Activated CD8-positive, alpha-beta T cell treated with anti-CD3 and anti-CD28 coated beads for 36 hours (primary cell): ENCODE measurements at regions of chr3 and their contacts with region 1.

Region 1: DNA sequence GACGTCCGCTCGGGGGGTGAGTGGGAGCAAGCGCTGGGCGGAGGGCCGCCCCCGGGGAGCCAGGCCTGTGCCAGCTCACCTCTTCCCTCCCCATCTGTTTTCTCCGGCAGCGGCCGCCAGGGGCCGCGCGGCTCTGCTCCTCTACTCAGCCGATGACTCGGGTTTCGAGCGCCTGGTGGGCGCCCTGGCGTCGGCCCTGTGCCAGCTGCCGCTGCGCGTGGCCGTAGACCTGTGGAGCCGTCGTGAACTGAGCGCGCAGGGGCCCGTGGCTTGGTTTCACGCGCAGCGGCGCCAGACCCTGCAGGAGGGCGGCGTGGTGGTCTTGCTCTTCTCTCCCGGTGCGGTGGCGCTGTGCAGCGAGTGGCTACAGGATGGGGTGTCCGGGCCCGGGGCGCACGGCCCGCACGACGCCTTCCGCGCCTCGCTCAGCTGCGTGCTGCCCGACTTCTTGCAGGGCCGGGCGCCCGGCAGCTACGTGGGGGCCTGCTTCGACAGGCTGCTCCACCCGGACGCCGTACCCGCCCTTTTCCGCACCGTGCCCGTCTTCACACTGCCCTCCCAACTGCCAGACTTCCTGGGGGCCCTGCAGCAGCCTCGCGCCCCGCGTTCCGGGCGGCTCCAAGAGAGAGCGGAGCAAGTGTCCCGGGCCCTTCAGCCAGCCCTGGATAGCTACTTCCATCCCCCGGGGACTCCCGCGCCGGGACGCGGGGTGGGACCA is 632 bp upstream of the CRELD1 start:
- DNase-seq: peak; percentile 95
- ATAC-seq: peak; percentile 78
- H3K4me3 Mint-ChIP-seq: peak overlapping the region; percentile 83
- H3K27ac Mint-ChIP-seq: peak overlapping the region; percentile 91
- H3K4me1 Mint-ChIP-seq: peaks cover 32% of the 10 kb centered on the region
- H3K27me3 Mint-ChIP-seq: no peaks in the 10 kb centered on the region
- CTCF ChIP-seq: peak; percentile 85

Region 2: DNA sequence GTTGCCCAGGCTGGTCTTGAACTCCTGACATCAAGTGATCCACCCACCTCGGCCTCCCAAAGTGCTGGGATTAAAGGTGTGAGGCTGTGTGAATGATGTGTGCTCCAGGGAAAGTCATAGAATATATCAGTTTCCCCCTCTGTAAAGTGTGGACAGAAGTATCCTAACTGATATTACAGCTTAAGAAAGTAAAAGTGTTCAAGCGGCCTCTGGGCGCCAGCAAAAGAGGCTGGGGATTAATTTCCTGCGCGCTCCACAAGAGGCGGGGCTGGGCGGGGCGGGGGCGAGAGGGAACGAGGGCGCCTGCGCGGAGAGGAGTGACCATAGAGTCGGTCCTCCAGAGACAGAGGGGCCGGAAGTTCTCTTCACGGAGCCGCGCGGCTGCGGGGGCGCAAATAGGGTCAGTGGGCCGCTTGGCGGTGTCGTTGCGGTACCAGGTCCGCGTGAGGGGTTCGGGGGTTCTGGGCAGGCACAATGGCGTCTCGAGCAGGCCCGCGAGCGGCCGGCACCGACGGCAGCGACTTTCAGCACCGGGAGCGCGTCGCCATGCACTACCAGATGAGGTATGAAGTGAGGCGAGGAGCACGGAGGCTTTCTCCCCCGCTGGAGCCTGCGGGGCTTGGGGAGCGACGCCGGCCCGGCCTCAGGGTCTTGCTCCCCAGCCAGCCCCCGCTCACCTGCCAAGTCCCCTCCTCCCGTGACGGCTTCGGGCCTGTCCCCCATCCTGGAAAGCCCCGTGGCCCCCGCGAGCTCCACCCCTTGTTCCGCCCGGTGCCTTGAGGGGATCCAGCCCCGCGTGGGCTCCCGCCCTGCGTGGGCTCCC is 42.5 kb before region 1 on chr3 and contains the start of gene JAGN1:
- CTCF ChIA-PET with region 1: interaction called, 25 read pairs
- POLR2A ChIA-PET with region 1: interaction called, 57 read pairs
- intact Hi-C with region 1: no loop called
- DNase-seq: peak; percentile 94
- ATAC-seq: peak; percentile 86
- H3K4me3 Mint-ChIP-seq: peak within 1 kb of the TSS; percentile 99
- H3K27ac Mint-ChIP-seq: peak within 1 kb of the TSS; percentile 99
- H3K4me1 Mint-ChIP-seq: peaks cover 27% of the 10 kb centered on the region
- H3K27me3 Mint-ChIP-seq: no peaks in the 10 kb centered on the region
- CTCF ChIP-seq: no peak
- total RNA-seq, gene JAGN1: 29.7 to 30.3 TPM

Region 3: DNA sequence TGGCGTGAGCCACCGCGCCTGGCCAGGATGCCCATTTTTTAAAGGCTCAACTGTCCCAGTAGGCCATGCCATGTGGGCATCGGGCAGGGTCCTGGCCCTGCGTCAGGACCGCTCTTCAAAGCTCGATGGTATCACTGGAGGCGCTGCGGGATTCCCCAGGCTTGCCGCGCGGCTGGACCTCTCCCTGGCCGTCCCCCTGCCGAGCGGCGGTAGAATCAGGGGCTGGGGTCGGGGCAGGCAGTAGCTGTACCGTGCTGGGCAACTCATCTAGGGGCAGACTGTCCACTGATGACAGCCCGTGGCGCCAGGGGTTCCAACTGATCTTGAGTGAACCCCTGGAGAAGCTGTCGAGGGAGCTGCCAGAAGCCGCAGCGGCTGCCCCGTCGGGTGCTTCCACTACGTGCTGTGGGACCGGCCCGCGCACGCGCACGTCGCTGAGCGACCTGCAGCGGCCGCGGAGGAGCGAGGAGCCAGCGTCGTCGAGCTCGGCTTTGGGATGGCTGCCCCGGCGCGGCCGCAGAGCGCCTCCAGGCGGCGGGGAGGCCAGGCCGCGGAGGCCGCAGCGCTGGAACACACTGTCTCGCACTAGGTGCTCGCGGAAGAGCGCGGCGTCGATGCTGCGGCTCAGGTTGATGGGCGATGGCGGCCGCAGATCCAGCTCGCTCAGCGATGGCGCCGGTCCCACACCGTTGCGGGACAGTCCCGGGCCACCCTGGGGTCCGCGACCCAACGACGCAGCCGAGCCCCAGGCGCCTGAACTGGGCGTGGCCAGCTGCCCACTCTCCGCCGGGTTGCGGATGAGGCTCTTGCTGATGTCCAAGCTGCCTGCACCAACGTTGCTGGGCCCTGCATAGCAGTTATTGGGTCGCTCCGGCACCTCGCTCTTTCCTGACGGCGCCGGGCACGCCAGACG is 13.4 kb after region 1 on chr3:
- CTCF ChIA-PET with region 1: interaction called, 42 read pairs
- POLR2A ChIA-PET with region 1: interaction called, 36 read pairs
- intact Hi-C with region 1: no loop called
- DNase-seq: peak; percentile 83
- ATAC-seq: peak; percentile 86
- H3K4me3 Mint-ChIP-seq: peak overlapping the region; percentile 78
- H3K27ac Mint-ChIP-seq: peak overlapping the region; percentile 81
- H3K4me1 Mint-ChIP-seq: peaks cover 15% of the 10 kb centered on the region
- H3K27me3 Mint-ChIP-seq: no peaks in the 10 kb centered on the region
- CTCF ChIP-seq: peak; percentile 46

Region 4: DNA sequence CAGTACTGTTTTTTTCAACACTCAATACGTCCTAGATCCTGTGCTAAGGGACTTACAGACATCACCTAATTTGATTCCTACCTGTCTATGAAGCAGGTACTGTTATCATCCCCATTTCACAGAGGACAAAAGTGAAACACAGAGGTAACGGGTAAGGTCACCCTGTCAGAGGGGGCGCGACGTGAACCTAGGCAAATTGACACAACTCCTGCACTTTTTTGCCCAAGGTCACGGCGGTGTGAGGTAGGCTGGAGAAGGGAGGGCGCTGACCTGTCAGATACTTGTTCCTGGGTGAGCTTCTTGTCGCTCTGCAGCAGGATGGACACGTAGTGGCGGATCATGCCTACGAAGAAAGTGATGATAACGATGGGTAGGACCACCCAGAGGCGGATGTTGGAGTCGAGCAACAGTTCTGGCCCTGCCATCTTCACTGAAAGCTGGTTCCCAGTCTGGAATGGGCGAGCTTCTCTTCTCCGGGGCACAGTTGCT is 53.3 kb after region 1 on chr3:
- CTCF ChIA-PET with region 1: interaction called, 6 read pairs
- POLR2A ChIA-PET with region 1: interaction called, 13 read pairs
- intact Hi-C with region 1: no loop called
- DNase-seq: no peak
- ATAC-seq: peak; percentile 56
- H3K4me3 Mint-ChIP-seq: peak overlapping the region; percentile 97
- H3K27ac Mint-ChIP-seq: peak overlapping the region; percentile 95
- H3K4me1 Mint-ChIP-seq: peaks cover 34% of the 10 kb centered on the region
- H3K27me3 Mint-ChIP-seq: no peaks in the 10 kb centered on the region
- CTCF ChIP-seq: no peak